ENCODE measurements at regions of chr3 and their contacts with region 1.

Region 1: DNA sequence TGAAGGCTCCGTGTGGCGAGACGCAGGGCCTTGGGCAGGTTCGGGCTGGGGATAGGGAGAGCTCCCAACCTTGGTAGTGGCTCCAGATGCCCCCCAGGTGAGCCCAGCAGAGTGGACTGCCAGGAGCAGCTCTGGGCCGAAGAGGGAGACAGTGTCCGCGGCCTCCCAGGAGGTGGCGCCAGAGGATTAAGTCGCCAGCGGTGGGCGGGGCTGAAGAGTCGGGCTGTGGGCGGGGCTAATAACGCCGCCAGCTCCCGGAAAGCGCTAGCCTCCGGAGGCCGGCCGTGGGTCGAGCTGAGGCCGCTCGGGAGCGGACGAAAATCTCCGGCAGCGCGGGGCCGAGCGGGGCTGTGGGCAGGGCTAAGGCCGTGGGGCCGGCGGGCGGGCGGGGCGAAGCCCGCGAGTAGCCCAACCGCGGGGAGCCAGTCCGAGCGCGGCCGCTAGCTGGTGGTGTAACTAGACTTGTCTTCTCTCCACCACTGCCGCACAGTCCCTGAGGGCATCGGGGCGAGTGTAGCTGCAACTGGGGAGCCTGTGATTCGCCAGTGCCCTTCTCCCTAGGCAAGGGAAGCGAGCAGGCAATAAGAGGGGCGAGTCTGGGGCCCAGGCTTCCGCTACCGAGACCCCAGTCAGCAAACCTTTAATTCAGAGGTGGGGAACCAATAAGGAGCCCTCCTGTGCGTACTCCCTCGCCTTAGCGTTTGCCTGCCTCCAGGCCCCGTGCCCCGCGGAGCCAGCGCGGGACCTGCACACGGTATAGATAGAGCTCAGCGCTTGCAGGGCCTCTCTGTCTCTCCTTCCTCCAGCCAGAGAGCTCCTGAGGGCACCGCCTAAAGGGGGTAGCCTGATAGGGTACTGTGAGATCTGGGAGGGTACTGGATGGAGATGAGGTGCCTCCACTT is 14.4 kb upstream of the BSN start:
- DNase-seq: peak; percentile 94
- H3K4me3 ChIP-seq: peak overlapping the region; percentile 62
- H3K27ac ChIP-seq: peak overlapping the region; percentile 79
- H3K4me1 ChIP-seq: no peaks in the 10 kb centered on the region
- H3K27me3 ChIP-seq: no peaks in the 10 kb centered on the region
- CTCF ChIP-seq: peak; percentile 74

Region 2: DNA sequence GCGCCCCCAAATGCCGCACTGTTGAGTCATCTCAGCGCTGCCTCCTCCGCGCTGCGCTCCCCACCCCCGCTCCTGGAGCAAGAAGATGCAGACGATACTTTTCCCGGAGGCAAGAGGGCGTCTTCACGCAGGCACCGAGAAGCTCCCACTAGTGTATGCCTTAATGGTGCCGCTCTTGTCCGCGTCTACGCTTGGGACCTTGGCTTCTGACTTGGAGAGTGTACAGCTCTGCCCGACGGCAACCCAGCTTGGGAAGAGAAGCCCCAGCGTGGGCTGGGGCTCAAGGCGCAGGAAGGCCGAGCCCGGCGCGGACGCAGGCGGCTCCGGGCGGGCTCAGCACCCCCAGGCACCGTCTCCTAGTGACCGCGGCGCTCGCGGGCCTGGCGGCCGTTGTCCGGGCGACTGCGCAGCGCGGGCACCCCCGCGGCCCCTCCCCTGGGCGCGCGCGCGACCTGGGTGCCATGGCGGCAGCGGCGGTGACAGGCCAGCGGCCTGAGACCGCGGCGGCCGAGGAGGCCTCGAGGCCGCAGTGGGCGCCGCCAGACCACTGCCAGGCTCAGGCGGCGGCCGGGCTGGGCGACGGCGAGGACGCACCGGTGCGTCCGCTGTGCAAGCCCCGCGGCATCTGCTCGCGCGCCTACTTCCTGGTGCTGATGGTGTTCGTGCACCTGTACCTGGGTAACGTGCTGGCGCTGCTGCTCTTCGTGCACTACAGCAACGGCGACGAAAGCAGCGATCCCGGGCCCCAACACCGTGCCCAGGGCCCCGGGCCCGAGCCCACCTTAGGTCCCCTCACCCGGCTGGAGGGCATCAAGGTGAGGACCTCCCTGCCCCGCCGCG is 549.9 kb before region 1 on chr3 and contains the start of gene P4HTM:
- intact Hi-C with region 1: no loop called
- DNase-seq: peak; percentile 90
- H3K4me3 ChIP-seq: peak within 1 kb of the TSS; percentile 99
- H3K27ac ChIP-seq: peak within 1 kb of the TSS; percentile 94
- H3K4me1 ChIP-seq: peaks cover 16% of the 10 kb centered on the region
- H3K27me3 ChIP-seq: no peaks in the 10 kb centered on the region
- CTCF ChIP-seq: peak; percentile 23
- total RNA-seq, gene P4HTM: 34.9 to 73.9 TPM

Region 3: GRCh38 chr3:49428697-49429100 is 111.2 kb before region 1 on chr3:
- intact Hi-C with region 1: no loop called
- DNase-seq: no peak
- H3K4me3 ChIP-seq: peak overlapping the region; percentile 68
- H3K27ac ChIP-seq: peak overlapping the region; percentile 91
- H3K4me1 ChIP-seq: no peaks in the 10 kb centered on the region
- H3K27me3 ChIP-seq: no peaks in the 10 kb centered on the region
- CTCF ChIP-seq: no peak

Region 4: DNA sequence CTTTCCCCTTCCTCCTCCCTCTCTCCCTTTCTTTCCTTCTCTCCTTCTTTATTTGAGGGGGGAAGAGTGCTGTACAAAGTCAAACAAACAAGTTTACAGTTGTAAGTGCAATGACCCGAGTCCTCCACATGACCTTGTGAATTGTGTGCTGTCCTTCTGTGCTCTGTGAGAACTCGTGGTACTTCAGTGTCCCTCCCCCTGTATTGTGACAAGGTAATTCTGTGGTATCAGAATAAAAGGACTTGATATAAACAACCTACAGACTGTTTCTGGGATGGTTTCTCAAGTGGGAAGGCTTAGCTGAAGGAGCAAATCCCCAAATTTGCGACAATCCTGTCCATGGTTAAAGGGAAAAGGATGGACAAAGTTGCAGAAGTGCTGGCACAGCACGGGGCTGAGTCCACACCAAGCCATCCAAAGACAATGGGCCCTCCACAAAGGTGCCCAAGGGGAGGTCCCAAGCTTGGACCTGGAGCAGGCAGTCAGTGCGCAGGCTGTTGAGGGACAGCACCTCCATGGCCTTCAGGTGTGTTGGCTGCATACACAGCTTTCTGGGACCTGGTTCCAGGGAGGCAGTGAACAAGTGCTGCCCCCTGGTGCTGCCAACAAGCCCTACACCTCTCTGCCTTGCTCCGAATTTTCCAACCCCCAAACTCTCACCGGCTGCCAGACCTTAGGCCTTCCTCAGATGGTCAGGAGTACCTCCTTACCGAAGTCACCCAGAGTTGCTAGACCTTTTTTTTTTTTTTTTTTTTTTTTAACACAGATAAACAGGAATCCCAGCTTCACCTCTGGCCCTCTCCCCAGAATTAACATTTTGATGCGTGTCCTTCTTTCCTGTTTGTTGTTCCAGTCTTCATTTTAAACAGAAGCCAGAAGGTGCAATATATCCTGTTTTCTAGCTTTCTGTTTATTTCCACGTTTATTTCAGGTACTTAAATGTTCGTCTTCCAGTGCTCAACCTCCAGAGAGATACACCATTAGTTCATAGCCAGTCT is 131.7 kb after region 1 on chr3:
- intact Hi-C with region 1: loop called (anchors 2 kb)
- DNase-seq: peak; percentile 72
- H3K4me3 ChIP-seq: no peak overlapping the region
- H3K27ac ChIP-seq: no peak overlapping the region
- H3K4me1 ChIP-seq: no peaks in the 10 kb centered on the region
- H3K27me3 ChIP-seq: no peaks in the 10 kb centered on the region
- CTCF ChIP-seq: peak; percentile 81